ENCODE measurements at regions of chr17 and their contacts with region 1.

Region 1: GRCh38 chr17:4520894-4521600 is 22.4 kb downstream of the SPNS2 start:
- DNase-seq: peak in 1 of 2 experiments; percentile 52
- ATAC-seq: peak in 1 of 2 experiments; percentile 11; a peak in 2 of 6 replicates
- H3K4me3 ChIP-seq: no peak overlapping the region
- H3K27ac ChIP-seq: peak overlapping the region in 1 of 2 experiments; percentile 11; a peak in 2 of 6 replicates
- H3K4me1 ChIP-seq: peaks cover 15% of the 10 kb centered on the region; the same call in 2 of the 3 replicates
- CTCF ChIP-seq: no peak
- EP300 ChIP-seq: no peak
- POLR2A ChIP-seq: no peak
- RAD21 ChIP-seq: no peak

Region 2: GRCh38 chr17:4509923-4510617 is 11.0 kb before region 1 on chr17:
- CTCF ChIA-PET with region 1: interaction called, 11 read pairs
- POLR2A ChIA-PET with region 1: no interaction called
- DNase-seq: no peak
- ATAC-seq: no peak
- H3K4me3 ChIP-seq: no peak overlapping the region
- H3K27ac ChIP-seq: no peak overlapping the region
- H3K4me1 ChIP-seq: no peaks in the 10 kb centered on the region
- CTCF ChIP-seq: no peak
- EP300 ChIP-seq: no peak
- POLR2A ChIP-seq: no peak
- RAD21 ChIP-seq: no peak

Region 3: DNA sequence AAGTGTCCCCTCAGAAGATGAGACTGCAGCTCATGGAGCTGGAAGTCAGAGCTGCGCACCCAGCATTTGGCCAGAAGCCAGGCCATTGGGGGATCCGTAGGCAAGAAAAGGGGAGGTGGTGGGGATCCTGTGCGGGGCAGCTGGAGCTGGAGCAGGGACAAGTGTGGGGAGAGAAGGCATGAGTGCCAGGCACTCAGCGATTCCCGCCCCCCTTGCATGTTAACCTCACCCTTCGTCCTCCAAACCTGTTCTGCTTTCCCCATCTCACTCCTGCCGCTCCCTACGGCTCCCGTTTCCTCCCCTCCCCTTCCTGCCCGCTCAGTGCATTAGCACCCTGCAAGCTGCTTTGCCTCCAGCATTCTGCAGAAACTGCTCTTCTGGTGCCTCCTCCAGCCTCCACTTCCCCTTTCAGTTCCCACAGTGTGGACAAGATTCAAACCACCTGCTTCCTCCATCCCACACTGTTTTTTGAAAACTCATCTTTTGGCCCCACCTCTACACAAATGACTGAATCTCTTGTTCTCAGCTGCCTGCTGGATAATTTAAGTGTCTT is 114.9 kb after region 1 on chr17:
- CTCF ChIA-PET with region 1: no interaction called
- POLR2A ChIA-PET with region 1: no interaction called
- DNase-seq: no peak
- ATAC-seq: no peak
- H3K4me3 ChIP-seq: no peak overlapping the region
- H3K27ac ChIP-seq: no peak overlapping the region
- H3K4me1 ChIP-seq: 0 out of 3 replicates have a peak, but pooled peaks cover 3% of the 10 kb centered on the region
- CTCF ChIP-seq: no peak
- EP300 ChIP-seq: no peak
- POLR2A ChIP-seq: no peak
- RAD21 ChIP-seq: no peak

Measured in A549 (cell line).